ENCODE measurements at regions of chr9 and their contacts with region 1.

Region 1: GRCh38 chr9:98255578-98256296 is at the start of gene TBC1D2:
- DNase-seq: peak; percentile 98
- ATAC-seq: peak; percentile 98
- total RNA-seq, gene TBC1D2: 2.0 TPM

Region 2: DNA sequence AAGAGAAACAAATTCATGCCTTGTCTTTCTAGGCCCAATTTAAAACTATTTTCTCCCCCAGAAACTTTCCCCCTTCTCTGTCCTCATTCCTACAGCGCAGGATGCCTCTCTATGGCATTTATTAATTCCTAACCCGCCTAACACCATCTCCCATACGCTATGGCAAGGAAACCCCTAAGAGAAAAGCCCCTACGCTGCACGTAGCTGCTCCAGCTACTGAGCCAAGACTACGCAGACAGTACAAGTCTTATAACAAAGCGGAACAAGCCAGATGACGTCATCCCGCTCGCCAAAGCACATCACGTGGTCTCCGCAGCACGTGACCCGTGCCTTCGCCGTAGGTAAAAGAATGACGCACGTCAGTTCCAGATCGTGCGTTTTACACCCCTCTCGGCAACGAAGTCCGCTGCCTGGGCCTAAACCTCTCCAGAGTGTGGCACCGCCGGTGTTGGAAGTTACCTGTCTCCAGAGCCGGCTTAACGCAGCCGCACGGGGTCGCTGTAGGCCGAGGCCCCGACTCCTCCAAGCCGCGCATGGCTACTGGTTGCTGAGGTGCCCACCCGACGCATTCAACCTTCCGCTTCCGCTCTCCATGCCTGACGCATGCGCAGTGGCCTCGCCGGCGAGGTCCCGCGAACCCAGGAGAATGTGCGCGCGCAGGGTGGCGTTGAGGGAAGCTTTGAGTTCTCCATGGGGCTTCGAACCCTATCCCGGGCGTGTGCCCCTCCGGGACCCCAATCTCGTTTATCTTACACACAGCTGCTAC is 333.6 kb before region 1 on chr9 and contains the start of gene TRMO:
- intact Hi-C with region 1: loop called (anchors 2 kb)
- DNase-seq: peak; percentile 99
- ATAC-seq: peak; percentile 98
- total RNA-seq, gene TRMO: 5.8 TPM

Region 3: DNA sequence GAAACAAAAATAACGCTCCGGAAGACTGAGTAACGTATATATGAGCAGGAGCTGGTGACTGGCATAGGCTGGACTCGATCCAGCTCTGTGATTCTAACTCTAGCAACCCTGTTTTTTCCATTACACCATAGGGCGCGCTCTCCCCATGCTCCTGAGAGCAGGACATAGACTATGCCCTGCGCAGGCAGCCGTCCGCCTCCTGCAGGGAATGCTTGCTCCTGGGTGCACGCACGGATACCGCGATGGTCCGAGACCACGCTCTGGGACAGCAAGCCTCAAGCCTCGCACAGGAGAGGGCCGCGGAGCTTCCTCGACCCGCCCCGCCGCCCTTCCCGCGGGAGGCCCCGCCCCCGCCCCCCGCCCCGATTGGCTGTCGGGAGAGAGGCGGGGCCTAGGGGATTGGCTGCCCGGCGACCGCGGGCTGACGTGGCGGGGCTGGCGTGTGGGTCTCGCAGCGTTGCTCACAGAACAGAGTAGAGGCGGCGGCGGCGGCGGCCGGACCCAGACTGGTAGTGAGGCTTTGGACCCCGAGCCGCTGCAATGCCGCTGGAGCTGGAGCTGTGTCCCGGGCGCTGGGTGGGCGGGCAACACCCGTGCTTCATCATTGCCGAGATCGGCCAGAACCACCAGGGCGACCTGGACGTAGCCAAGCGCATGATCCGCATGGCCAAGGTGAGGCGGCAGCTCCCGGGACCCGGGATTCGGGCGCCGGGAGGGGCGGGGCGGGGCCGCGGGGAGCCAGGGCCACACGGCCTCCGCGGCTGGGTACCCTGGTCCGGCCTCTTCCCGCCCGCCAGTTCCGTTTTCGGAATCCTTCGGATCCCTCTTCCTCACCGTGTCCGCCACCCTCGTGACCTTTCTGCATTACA is 199.2 kb before region 1 on chr9 and contains the start of gene NANS:
- intact Hi-C with region 1: loop called (anchors 5 kb)
- DNase-seq: peak; percentile 96
- ATAC-seq: peak; percentile 100
- total RNA-seq, gene NANS: 33.4 TPM

Region 4: DNA sequence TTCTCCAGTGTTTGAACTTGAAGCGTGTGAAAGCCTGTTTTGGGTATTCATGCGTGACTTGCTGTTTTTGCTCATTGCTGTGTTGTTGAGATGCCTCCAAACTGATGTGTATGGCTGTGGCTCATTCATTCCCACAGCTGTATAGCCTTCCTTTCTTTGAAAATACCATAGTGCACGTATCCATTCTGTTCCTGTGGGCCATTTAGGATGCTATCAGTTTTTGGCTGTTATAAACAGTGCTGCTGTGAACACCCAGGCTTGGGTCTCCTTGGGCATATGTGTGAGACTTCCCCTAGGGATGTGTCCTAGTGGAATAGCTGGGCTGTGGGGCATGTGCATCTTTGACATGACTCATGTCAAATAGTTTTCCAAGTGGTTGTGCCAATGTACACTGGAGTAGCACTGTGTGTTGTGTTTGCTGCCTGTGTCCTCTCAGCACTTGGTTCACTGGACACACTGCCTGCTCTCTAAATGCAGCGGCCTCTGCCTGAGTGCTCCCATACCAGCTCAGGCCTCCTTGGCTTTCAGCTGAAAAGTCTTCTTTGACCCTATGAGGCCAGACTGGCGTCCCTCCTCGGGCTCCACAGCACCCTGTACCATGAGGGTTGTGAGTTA is 102.3 kb after region 1 on chr9:
- intact Hi-C with region 1: no loop called
- DNase-seq: no peak
- ATAC-seq: no peak

Measured in Right ventricle myocardium superior (tissue), 1 donor.